Caco-2 (cell line): ENCODE measurements at regions of chr3 and their contacts with region 1.

Region 1: DNA sequence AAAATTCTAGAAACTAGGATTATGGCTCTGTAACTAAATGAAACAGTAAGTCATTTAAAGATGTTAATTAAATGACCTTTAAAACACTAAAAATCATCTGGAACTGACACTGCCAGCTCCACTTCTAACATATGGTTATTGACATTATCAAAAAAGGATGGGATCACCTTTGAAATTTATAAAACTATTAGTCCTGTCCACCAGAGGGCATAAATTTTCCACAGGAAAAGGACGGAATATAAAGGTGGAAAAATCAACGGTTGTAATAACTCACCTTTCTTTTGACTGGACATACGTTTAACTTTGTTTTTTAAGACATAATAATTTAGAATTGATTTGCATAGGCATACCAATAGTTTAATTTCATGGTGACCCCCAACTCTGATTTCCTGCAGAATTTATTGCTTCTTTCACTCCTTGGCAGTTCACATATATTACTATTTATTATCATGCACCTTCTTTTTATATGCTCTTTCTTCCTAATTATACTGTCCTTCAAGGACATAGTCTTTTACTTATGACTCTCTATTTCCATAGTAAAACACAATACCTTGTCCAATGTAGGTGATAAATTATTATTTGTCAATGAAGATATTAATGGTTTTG is 345.7 kb downstream of the CADM2 start:
- DNase-seq: peak in 1 of 2 experiments; percentile 20
- H3K4me3 ChIP-seq: no peak overlapping the region
- H3K4me3 Mint-ChIP-seq: no peak overlapping the region
- H3K27ac Mint-ChIP-seq: no peak overlapping the region
- H3K4me1 ChIP-seq: no peaks in the 10 kb centered on the region
- H3K4me1 Mint-ChIP-seq: no peaks in the 10 kb centered on the region
- H3K27me3 ChIP-seq: no peaks in the 10 kb centered on the region
- H3K27me3 Mint-ChIP-seq: no peaks in the 10 kb centered on the region
- CTCF ChIP-seq: peak in 1 of 2 experiments; percentile 43

Region 2: DNA sequence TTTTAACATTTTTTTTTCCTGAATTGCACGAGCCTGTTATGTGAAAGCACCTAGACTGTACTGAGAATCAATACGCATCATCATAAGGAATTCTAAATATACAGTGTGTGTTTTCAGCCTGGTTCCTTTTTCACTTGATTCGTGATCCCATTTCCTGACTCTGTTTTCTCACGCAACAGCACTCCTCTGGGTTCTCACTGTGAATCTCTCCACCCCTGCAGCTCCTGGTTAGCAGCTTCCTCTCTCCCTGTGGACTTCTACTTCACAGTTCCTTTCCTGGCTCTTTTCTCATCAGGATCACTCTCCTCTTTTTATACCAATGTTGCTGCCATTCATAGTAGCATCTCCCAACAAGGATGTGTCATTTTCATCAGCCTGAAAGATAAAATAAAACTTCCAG is 48.5 kb before region 1 on chr3:
- CTCF ChIA-PET with region 1: no interaction called
- POLR2A ChIA-PET with region 1: no interaction called
- intact Hi-C with region 1: no loop called
- DNase-seq: no peak
- H3K4me3 ChIP-seq: no peak overlapping the region
- H3K4me3 Mint-ChIP-seq: no peak overlapping the region
- H3K27ac Mint-ChIP-seq: no peak overlapping the region
- H3K4me1 ChIP-seq: no peaks in the 10 kb centered on the region
- H3K4me1 Mint-ChIP-seq: no peaks in the 10 kb centered on the region
- H3K27me3 ChIP-seq: no peaks in the 10 kb centered on the region
- H3K27me3 Mint-ChIP-seq: peaks cover 3% of the 10 kb centered on the region
- CTCF ChIP-seq: no peak

Region 3: DNA sequence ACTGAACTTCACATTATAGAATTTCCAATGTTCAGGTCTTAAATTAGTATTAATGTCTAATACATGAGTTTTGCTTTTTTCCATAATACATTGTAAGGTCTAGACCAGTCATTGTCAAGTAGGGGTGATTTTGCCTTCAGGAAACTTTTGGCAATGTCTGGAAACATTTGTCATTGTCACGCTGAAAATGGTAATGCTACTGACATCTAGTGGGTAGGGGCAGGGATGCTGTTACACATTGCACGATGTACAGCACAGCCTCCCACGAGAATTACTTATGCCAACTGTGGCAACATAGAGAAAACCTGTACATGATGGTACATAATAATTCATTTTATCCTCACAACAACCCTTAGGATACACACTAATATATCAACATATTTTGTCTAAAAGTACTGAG is 38.5 kb after region 1 on chr3:
- CTCF ChIA-PET with region 1: no interaction called
- POLR2A ChIA-PET with region 1: no interaction called
- intact Hi-C with region 1: loop called (anchors 1 kb)
- DNase-seq: peak; percentile 23 to 35
- H3K4me3 ChIP-seq: no peak overlapping the region
- H3K4me3 Mint-ChIP-seq: no peak overlapping the region
- H3K27ac Mint-ChIP-seq: no peak overlapping the region
- H3K4me1 ChIP-seq: no peaks in the 10 kb centered on the region
- H3K4me1 Mint-ChIP-seq: no peaks in the 10 kb centered on the region
- H3K27me3 ChIP-seq: no peaks in the 10 kb centered on the region
- H3K27me3 Mint-ChIP-seq: no peaks in the 10 kb centered on the region
- CTCF ChIP-seq: peak in 1 of 2 experiments; percentile 46

Region 4: DNA sequence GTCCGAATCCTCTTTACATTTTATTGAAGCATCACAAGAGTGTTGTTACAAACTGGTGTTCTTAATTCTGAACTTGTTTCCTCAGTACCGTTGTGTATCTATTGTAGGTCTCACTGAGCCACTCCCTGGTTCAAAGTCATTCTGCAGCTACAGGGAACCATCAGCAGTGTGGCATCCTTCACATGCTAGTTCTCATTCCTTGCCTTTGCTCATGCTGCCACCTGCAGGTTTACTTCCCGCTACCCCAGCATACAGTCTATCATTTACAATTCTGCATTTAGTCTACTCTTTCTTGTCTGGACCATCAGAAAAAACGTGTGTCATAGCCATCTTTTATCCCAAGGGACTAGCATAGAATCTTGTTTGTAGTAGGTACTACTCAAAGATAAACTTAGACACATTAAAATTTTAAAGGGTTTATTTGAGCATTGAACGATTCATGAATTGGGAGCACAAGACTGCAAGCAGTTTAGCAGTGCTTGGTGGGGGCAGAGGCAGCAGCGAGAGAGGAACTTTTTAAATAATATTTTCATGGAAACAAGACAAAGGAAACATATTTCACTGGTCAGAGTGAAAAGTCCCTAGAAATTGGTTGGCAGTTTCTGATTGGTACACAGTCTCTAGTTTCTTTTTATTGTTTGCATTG is 56.4 kb after region 1 on chr3:
- CTCF ChIA-PET with region 1: interaction called, 3 read pairs
- POLR2A ChIA-PET with region 1: no interaction called
- intact Hi-C with region 1: loop called (anchors 1 kb)
- DNase-seq: peak; percentile 60 to 63
- H3K4me3 ChIP-seq: no peak overlapping the region
- H3K4me3 Mint-ChIP-seq: no peak overlapping the region
- H3K27ac Mint-ChIP-seq: no peak overlapping the region
- H3K4me1 ChIP-seq: no peaks in the 10 kb centered on the region
- H3K4me1 Mint-ChIP-seq: no peaks in the 10 kb centered on the region
- H3K27me3 ChIP-seq: no peaks in the 10 kb centered on the region
- H3K27me3 Mint-ChIP-seq: no peaks in the 10 kb centered on the region
- CTCF ChIP-seq: peak; percentile 54 to 69

Region 5: DNA sequence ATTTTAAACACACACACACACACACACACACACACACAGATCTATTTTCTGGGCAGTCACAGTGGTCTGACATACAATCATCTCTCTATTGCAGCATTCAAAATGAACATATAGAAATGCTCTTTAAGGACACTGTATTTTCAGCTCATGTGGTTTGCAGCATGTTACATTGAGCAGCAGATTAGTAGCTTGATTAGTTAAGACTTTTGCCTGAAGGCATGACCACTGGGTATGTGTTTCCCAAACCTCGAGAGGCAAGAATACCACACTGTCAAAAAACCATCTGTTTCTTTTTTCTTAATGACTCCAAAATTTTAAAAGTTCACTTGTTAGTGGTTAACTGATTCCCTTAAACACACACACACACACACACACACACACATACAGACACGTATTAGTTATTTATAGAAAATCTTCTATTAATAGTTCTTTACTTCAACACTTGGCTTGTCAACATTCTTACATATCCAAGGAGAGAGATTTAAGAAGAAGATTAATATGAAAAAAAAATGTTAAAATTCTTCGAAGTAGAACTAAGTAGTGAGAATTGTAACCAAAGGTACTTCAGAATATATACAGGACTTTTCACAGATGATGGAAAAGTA is 172.5 kb after region 1 on chr3:
- CTCF ChIA-PET with region 1: no interaction called
- POLR2A ChIA-PET with region 1: no interaction called
- intact Hi-C with region 1: no loop called
- DNase-seq: no peak
- H3K4me3 ChIP-seq: no peak overlapping the region
- H3K4me3 Mint-ChIP-seq: no peak overlapping the region
- H3K27ac Mint-ChIP-seq: no peak overlapping the region
- H3K4me1 ChIP-seq: no peaks in the 10 kb centered on the region
- H3K4me1 Mint-ChIP-seq: no peaks in the 10 kb centered on the region
- H3K27me3 ChIP-seq: no peaks in the 10 kb centered on the region
- H3K27me3 Mint-ChIP-seq: no peaks in the 10 kb centered on the region
- CTCF ChIP-seq: no peak

Region 6: DNA sequence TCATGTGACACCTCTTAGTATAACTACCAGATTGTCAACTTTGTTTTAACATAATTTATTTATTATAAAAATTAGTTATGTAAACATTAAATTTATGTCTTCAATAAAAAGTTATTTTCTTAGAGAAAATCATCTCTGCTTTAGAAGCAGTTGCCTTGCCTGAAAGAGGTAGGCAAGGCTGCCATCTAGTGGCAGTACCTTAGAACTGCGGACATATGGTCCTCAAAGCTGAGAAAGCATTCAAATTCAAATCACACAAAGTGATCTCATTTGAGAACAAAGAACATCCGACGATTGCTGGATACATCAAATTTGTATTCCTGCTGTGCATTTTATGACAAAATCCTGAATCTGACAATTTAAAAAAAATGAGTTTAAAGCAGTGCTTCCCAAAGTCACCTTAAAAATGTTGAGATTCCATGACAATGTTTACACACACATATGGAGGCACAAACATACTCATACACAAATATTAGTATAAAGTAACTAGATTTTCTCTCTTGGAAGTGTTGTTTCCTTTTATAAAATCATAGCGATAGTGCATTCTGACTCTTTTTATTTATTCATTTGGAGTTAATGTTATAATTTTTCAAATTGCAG is 271.7 kb after region 1 on chr3:
- CTCF ChIA-PET with region 1: no interaction called
- POLR2A ChIA-PET with region 1: no interaction called
- intact Hi-C with region 1: loop called (anchors 1 kb)
- DNase-seq: peak; percentile 55 to 61
- H3K4me3 ChIP-seq: no peak overlapping the region
- H3K4me3 Mint-ChIP-seq: no peak overlapping the region
- H3K27ac Mint-ChIP-seq: no peak overlapping the region
- H3K4me1 ChIP-seq: no peaks in the 10 kb centered on the region
- H3K4me1 Mint-ChIP-seq: no peaks in the 10 kb centered on the region
- H3K27me3 ChIP-seq: no peaks in the 10 kb centered on the region
- H3K27me3 Mint-ChIP-seq: no peaks in the 10 kb centered on the region
- CTCF ChIP-seq: peak; percentile 74 to 83